ENCODE measurements at regions of chr6 and their contacts with region 1.

Region 1: GRCh38 chr6:31739639-31740396 is at the start of gene MSH5:
- DNase-seq: peak; percentile 99
- H3K4me3 ChIP-seq: peak within 1 kb of the TSS; percentile 74
- H3K27ac ChIP-seq: peak within 1 kb of the TSS; percentile 86
- H3K4me1 ChIP-seq: peaks cover 10% of the 10 kb centered on the region
- H3K27me3 ChIP-seq: no peaks in the 10 kb centered on the region
- CTCF ChIP-seq: no peak
- total RNA-seq, gene MSH5: 13.3 to 34.2 TPM

Region 2: GRCh38 chr6:31702819-31703522 is 36.8 kb before region 1 on chr6 and contains the start of gene ABHD16A:
- intact Hi-C with region 1: loop called (anchors 5 kb)
- DNase-seq: peak; percentile 99
- H3K4me3 ChIP-seq: peak within 1 kb of the TSS; percentile 48
- H3K27ac ChIP-seq: peak within 1 kb of the TSS; percentile 95
- H3K4me1 ChIP-seq: peaks cover 12% of the 10 kb centered on the region
- H3K27me3 ChIP-seq: no peaks in the 10 kb centered on the region
- CTCF ChIP-seq: no peak
- total RNA-seq, gene ABHD16A: 56.8 to 65.2 TPM

Region 3: GRCh38 chr6:31827286-31828079 is 87.7 kb after region 1 on chr6 and contains the start of gene HSPA1B:
- intact Hi-C with region 1: no loop called
- DNase-seq: peak; percentile 100
- H3K4me3 ChIP-seq: peak within 1 kb of the TSS; percentile 46
- H3K27ac ChIP-seq: peak within 1 kb of the TSS; percentile 99
- H3K4me1 ChIP-seq: peaks cover 5% of the 10 kb centered on the region
- H3K27me3 ChIP-seq: no peaks in the 10 kb centered on the region
- CTCF ChIP-seq: no peak
- total RNA-seq, gene HSPA1B: 278 to 543 TPM